ENCODE measurements at regions of chrX and their contacts with region 1.

Region 1: GRCh38 chrX:41333744-41334259 is at the start of gene DDX3X:
- DNase-seq: peak; percentile 83 to 94 (median 90)
- ATAC-seq: peak; percentile 87 to 89 (median 88)
- H3K4me3 ChIP-seq: peak within 1 kb of the TSS; percentile 81 to 99 (median 96)
- H3K27ac ChIP-seq: peak within 1 kb of the TSS; percentile 97 to 100 (median 100)
- H3K4me1 ChIP-seq: peaks cover 0 to 55% (median 17%) of the 10 kb centered on the region in 12 donors
- H3K27me3 ChIP-seq: no peaks in the 10 kb centered on the region
- CTCF ChIP-seq: peak in 3 of 12 donors; percentile 17 to 30 (median 20)
- POLR2A ChIP-seq: peak; percentile 47 to 98
- total RNA-seq, gene DDX3X: 128 to 272 (median 178) TPM

Region 2: GRCh38 chrX:41441934-41442823 is 108.4 kb after region 1 on chrX:
- intact Hi-C with region 1: loop called in 8 of 10 experiments (anchors 2 to 10 kb)
- DNase-seq: peak; percentile 74 to 91 (median 86)
- ATAC-seq: peak; percentile 92 to 95 (median 94)
- H3K4me3 ChIP-seq: peak overlapping the region in 10 of 12 donors; percentile 33 to 54 (median 44)
- H3K27ac ChIP-seq: peak overlapping the region; percentile 41 to 89 (median 67)
- H3K4me1 ChIP-seq: peaks cover 0 to 12% (median 2%) of the 10 kb centered on the region in 12 donors
- H3K27me3 ChIP-seq: peaks cover 0 to 12% (median 0%) of the 10 kb centered on the region in 9 donors
- CTCF ChIP-seq: peak; percentile 49 to 79 (median 59)
- POLR2A ChIP-seq: peak in 1 of 2 donors; percentile 44

Region 3: GRCh38 chrX:41449615-41450014 is 115.8 kb after region 1 on chrX:
- intact Hi-C with region 1: loop called in 7 of 10 experiments (anchors 5 to 10 kb)
- DNase-seq: peak in 1 of 5 donors; percentile 25
- ATAC-seq: peak; percentile 78 to 88 (median 84)
- H3K4me3 ChIP-seq: peak overlapping the region in 6 of 12 donors; percentile 0 to 37 (median 16)
- H3K27ac ChIP-seq: peak overlapping the region; percentile 38 to 76 (median 62)
- H3K4me1 ChIP-seq: peaks cover 0 to 14% (median 4%) of the 10 kb centered on the region in 12 donors
- H3K27me3 ChIP-seq: peaks cover 0 to 5% (median 0%) of the 10 kb centered on the region in 9 donors
- CTCF ChIP-seq: no peak
- POLR2A ChIP-seq: no peak

Measured in heart left ventricle (tissue), 16 donors.